Right ventricle myocardium inferior (tissue), 1 donor: ENCODE measurements at regions of chr1 and their contacts with region 1.

Region 1: DNA sequence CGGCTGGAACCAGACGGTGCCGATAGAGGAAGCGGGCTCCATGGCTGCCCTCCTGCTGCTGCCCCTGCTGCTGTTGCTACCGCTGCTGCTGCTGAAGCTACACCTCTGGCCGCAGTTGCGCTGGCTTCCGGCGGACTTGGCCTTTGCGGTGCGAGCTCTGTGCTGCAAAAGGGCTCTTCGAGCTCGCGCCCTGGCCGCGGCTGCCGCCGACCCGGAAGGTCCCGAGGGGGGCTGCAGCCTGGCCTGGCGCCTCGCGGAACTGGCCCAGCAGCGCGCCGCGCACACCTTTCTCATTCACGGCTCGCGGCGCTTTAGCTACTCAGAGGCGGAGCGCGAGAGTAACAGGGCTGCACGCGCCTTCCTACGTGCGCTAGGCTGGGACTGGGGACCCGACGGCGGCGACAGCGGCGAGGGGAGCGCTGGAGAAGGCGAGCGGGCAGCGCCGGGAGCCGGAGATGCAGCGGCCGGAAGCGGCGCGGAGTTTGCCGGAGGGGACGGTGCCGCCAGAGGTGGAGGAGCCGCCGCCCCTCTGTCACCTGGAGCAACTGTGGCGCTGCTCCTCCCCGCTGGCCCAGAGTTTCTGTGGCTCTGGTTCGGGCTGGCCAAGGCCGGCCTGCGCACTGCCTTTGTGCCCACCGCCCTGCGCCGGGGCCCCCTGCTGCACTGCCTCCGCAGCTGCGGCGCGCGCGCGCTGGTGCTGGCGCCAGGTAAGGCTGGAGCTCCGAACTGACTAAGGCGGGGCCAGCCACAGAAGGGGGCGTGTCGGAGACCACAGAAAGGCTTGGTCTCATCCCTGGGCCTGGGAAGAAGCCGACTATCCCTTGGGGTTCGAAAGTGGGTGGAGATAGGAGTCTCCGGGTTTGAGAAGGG is 486 bp downstream of the SLC27A3 start:
- DNase-seq: peak; percentile 88
- ATAC-seq: peak; percentile 41

Region 2: DNA sequence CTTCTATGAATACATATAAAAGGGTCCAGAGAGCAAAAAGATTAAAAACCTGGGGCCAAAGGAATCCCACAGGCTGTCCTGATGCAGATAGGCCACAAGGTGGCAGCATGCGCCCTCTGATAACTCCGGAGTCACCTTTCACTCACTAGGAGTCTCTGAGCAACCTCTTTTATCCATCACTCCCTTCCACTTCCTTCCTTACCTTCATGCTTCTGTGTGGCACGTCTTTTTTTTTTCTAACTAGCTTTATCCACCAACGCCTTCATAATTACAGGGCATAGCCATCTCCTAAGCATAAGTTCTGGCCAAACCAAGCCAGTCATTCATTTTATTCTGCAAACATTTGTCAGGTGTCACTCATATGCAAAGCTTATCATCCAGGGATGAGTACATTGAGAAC is 423.2 kb before region 1 on chr1:
- intact Hi-C with region 1: loop called (anchors 10 kb)
- DNase-seq: peak; percentile 81
- ATAC-seq: peak; percentile 84

Region 3: DNA sequence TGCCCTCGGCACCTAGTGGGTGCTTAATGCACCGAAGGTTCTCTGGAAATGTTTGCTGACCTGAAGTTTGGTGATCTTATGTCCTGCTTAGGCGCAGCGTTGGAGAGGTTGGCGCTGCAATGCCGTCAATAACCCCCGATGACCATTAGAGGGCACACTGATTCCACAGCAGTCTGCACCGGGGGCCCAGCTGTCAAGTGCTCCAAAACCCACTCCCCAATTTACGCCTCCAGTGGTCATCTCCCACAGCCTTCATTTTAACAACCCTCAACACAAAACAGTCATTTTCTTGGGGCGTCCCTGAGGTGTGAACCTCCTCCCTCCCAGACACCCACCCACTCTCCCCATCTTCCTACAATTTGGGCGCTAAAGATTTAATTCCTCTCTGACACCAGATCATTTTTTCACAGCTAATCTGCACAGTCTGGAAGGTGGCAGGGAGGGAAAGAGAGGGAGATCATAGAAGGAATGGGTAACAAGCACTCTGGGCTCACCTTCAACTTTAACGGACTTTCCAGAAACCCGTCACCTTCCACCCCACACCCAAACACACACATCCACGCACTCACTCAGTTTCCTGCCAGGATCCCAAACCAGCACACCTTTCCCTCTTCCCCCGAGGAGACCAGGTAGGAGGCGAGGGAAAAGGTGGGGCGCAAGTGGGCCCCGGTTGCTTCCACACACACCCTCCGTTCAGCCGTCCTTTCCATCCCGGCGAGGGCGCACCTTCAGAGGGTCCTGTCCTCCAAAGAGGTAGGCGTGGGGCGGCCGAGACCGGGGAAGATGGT is 97.8 kb before region 1 on chr1:
- intact Hi-C with region 1: loop called (anchors 2 kb)
- DNase-seq: no peak
- ATAC-seq: peak; percentile 74

Region 4: GRCh38 chr1:153727463-153728304 is 48.0 kb before region 1 on chr1 and contains the start of gene INTS3:
- intact Hi-C with region 1: loop called (anchors 2 kb)
- DNase-seq: peak; percentile 100
- ATAC-seq: peak; percentile 99
- total RNA-seq, gene INTS3: 33.0 TPM